Activated naive CD4-positive, alpha-beta T cell treated with anti-CD3 and anti-CD28 coated beads, Interleukin-2, amount 10 ng/mL, durations not matched to agents 7 days and 5 days (primary cell): ENCODE measurements at regions of chr11 and their contacts with region 1.

Region 1: GRCh38 chr11:72722050-72722748 is 30.0 kb downstream of the ARAP1 start:
- DNase-seq: peak; percentile 91
- H3K4me3 Mint-ChIP-seq: peak overlapping the region; percentile 89
- H3K27ac Mint-ChIP-seq: peak overlapping the region; percentile 94
- H3K4me1 Mint-ChIP-seq: peaks cover 58% of the 10 kb centered on the region
- H3K27me3 Mint-ChIP-seq: peaks cover 4% of the 10 kb centered on the region

Region 2: DNA sequence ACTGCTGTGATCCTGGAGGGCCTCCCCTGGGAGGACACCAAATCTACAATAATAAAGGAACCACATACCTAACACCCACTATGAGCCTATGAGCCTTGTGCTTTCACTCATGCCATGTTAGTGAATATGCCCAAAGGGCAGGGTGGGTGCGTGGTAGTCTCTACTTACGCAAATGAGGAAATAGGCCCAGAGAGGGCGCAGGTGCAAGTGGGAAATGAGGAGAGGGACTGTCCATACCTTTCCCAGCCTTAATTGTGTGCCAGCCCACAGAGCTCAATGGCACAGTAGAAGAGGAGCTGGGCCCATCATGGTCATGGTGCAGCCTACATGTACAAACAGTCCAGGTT is 549.5 kb before region 1 on chr11:
- CTCF ChIA-PET with region 1: no interaction called
- DNase-seq: no peak
- H3K4me3 Mint-ChIP-seq: no peak overlapping the region
- H3K27ac Mint-ChIP-seq: no peak overlapping the region
- H3K4me1 Mint-ChIP-seq: peaks cover 4% of the 10 kb centered on the region
- H3K27me3 Mint-ChIP-seq: peaks cover 24% of the 10 kb centered on the region

Region 3: DNA sequence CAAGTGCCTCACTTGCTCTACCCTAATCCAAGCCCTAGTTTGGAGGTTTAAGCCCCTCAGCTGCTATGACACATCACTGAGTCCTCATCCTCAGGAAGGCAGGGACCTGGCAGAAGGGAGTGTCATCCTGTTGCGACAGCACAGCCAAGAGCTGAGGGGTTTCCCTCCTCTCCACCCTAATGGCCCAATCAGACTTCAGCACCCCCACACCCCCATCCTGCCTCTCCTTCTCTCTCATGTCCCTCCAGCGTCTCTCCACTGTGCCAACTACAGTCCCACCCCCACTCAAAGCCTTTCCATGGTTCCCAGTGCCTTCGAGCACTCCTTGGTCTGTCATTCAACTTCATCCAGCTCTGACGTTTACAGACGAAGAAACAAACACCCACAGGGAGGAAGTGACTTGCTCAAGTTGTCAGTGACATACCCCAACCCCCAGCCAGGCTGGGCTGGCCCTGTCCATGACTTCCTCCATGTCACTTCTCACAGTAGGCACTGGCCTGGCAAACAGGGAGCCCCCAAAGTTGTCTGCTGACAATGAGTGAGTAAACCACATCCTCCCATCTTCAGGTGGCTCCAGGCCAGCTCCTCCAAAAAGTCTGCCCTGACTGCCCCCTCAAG is 14.4 kb after region 1 on chr11:
- CTCF ChIA-PET with region 1: interaction called, 19 read pairs
- DNase-seq: peak; percentile 80
- H3K4me3 Mint-ChIP-seq: peak overlapping the region; percentile 72
- H3K27ac Mint-ChIP-seq: peak overlapping the region; percentile 99
- H3K4me1 Mint-ChIP-seq: peaks cover 64% of the 10 kb centered on the region
- H3K27me3 Mint-ChIP-seq: no peaks in the 10 kb centered on the region

Region 4: GRCh38 chr11:72781313-72782050 is 59.3 kb after region 1 on chr11:
- CTCF ChIA-PET with region 1: interaction called, 14 read pairs
- DNase-seq: peak; percentile 68
- H3K4me3 Mint-ChIP-seq: peak overlapping the region; percentile 73
- H3K27ac Mint-ChIP-seq: no peak overlapping the region
- H3K4me1 Mint-ChIP-seq: peaks cover 11% of the 10 kb centered on the region
- H3K27me3 Mint-ChIP-seq: peaks cover 59% of the 10 kb centered on the region

Region 5: GRCh38 chr11:72793425-72794367 is 71.5 kb after region 1 on chr11 and contains the start of gene STARD10:
- CTCF ChIA-PET with region 1: interaction called, 102 read pairs
- DNase-seq: peak; percentile 95
- H3K4me3 Mint-ChIP-seq: peak within 1 kb of the TSS; percentile 96
- H3K27ac Mint-ChIP-seq: peak within 1 kb of the TSS; percentile 98
- H3K4me1 Mint-ChIP-seq: peaks cover 27% of the 10 kb centered on the region
- H3K27me3 Mint-ChIP-seq: no peaks in the 10 kb centered on the region

Region 6: DNA sequence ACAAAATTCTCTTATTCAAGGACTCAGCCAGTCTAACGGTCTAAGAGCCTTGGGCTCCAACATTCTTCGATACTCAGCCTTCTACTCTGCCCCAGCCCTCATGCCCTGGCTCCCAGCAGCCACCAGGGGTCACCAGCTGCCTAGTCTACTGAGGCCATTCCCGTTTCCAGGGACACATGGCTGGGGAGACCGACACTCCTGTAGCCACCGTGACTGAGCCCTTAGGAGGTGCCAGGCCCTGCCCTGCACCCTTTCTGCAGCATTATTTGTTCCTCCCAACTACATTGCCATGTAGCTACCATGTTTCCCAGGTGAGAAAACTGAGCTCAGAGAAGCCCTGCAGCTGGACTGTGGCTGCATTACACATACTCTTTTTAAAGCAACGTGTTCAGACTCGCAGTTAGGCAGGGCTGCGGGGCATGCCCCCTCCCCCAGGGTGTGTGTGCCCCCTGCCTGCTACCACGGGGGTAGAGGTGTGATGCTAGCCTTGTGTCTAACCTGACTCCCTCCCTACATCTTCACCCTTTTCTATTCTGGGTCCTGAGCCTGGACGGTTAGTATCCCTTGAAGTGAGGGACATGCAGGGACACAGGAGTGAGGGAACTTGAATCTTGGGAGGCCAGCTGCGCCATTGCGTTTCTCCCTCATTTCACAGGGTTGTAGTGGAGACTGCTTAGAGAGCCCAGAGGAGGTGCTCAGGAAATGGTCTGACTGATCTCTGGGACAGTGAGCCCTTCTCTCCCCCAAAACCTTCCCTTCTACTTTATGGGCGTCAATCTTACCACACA is 109.5 kb after region 1 on chr11:
- CTCF ChIA-PET with region 1: interaction called, 16 read pairs
- DNase-seq: peak; percentile 66
- H3K4me3 Mint-ChIP-seq: no peak overlapping the region
- H3K27ac Mint-ChIP-seq: peak overlapping the region; percentile 76
- H3K4me1 Mint-ChIP-seq: peaks cover 31% of the 10 kb centered on the region
- H3K27me3 Mint-ChIP-seq: no peaks in the 10 kb centered on the region

Region 7: DNA sequence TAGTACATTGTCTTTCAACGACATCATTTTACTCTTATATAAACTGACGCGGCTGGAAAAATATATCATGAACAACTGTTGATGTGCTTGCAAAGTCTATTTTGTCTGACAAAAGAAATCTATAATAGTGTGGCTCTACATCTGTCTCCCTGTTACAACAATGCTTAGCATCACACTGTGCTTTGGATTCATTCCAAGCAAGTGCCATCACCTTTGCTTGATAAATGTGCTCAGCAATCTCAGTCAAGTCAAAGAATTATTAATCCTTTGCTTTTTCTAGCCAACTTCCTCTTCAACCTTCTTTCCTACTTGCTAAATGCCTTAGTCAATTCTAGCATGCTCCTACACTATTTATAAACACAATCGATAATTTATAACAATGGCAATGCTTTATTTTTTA is 279.4 kb after region 1 on chr11:
- CTCF ChIA-PET with region 1: no interaction called
- DNase-seq: no peak
- H3K4me3 Mint-ChIP-seq: no peak overlapping the region
- H3K27ac Mint-ChIP-seq: no peak overlapping the region
- H3K4me1 Mint-ChIP-seq: no peaks in the 10 kb centered on the region
- H3K27me3 Mint-ChIP-seq: no peaks in the 10 kb centered on the region